ENCODE measurements at regions of chr10 and their contacts with region 1.

Region 1: DNA sequence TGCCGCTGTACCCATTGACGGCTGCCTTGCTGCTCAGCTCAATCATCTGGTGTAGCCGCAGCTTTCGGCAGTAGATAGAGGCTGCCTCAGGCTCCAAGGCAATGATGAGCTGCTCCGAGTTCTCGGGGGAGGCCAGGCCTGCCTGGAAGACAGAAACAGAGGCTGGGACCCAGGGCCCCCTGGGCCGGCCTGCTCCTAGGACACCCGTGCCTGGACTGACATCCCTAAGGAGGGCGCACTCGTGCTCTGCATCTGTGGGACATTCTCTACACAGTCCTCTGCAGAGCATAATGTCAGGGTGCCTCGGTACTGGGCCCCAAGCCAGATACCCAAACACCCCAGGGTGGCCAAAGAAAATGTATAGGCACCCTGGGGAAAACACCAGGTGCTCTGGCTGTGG is 58.5 kb downstream of the HSPA12A start:
- DNase-seq: no peak
- H3K4me3 Mint-ChIP-seq: no peak overlapping the region
- H3K27ac Mint-ChIP-seq: no peak overlapping the region
- H3K4me1 Mint-ChIP-seq: peaks cover 1% of the 10 kb centered on the region
- H3K27me3 Mint-ChIP-seq: no peaks in the 10 kb centered on the region

Region 2: DNA sequence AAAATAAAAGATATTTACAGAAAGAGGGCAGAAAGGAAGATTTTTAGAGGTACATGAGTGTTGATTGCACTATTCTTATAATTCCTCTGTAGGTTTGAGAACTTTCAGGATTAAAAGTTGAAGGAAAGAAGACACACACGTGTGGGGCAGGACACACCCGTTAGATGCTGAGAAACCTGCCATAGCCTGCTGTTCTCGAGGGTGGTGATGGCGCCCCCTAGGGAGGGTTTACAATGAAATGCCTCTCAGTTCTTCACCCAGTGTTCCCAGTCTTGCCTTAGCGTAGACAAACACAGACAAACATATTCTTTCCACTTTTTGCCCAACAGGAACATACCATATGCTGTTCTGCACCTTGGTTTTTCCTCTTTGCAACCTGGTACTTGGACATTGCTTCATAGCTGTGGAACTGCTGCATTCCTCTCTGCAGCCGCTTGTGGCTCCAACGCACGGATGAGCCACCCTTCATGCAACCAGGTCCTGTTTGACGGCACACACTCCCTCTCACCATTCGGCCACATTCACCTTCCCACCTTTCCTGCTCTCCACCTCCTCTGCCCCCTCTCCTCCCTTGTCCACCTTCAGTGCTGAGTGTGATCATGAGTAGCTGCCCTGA is 81.8 kb after region 1 on chr10:
- CTCF ChIA-PET with region 1: interaction called, 13 read pairs
- POLR2A ChIA-PET with region 1: no interaction called
- DNase-seq: peak; percentile 38
- H3K4me3 Mint-ChIP-seq: no peak overlapping the region
- H3K27ac Mint-ChIP-seq: no peak overlapping the region
- H3K4me1 Mint-ChIP-seq: no peaks in the 10 kb centered on the region
- H3K27me3 Mint-ChIP-seq: peaks cover 17% of the 10 kb centered on the region

Region 3: DNA sequence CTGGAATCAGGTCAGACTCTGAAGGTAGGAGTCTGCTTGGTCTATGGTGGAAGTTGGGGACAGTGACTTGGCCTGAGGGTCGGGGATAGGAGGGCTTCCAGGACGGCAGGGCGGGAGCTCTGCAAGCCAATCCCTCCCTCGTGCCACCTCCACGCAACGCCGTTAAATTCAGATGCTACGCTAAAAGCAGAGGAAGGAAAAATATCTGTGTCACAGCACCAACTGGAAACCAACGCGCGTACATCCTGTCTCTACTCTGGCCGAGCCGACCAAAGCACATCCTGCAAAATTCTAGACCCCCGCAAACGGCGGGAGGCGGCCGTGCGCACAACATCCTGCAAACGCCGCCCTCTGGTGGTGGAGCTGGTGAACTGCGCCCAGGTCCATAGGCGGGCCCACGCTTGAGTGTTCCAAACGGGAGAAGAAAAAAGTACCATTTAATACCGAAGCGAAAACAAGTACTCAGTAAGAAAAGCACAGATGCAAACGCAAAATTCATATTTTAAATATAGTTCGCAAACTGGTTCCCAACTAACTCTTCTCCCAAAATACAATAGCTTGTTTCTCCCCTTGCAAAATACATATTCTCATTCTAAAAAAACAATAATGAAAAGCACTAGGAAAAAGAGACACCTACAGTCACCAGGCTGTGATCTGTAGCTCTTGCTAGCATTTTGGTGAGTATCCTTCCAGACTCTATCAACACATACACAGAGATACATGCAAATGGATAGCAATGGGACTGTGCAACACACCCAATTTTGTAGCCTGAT is 104.3 kb after region 1 on chr10:
- CTCF ChIA-PET with region 1: interaction called, 64 read pairs
- POLR2A ChIA-PET with region 1: no interaction called
- DNase-seq: peak; percentile 79
- H3K4me3 Mint-ChIP-seq: peak overlapping the region; percentile 44
- H3K27ac Mint-ChIP-seq: no peak overlapping the region
- H3K4me1 Mint-ChIP-seq: peaks cover 16% of the 10 kb centered on the region
- H3K27me3 Mint-ChIP-seq: peaks cover 3% of the 10 kb centered on the region